Activated naive CD4-positive, alpha-beta T cell treated with anti-CD3 and anti-CD28 coated beads for 36 hours (primary cell): ENCODE measurements at regions of chr6 and their contacts with region 1.

Region 1: DNA sequence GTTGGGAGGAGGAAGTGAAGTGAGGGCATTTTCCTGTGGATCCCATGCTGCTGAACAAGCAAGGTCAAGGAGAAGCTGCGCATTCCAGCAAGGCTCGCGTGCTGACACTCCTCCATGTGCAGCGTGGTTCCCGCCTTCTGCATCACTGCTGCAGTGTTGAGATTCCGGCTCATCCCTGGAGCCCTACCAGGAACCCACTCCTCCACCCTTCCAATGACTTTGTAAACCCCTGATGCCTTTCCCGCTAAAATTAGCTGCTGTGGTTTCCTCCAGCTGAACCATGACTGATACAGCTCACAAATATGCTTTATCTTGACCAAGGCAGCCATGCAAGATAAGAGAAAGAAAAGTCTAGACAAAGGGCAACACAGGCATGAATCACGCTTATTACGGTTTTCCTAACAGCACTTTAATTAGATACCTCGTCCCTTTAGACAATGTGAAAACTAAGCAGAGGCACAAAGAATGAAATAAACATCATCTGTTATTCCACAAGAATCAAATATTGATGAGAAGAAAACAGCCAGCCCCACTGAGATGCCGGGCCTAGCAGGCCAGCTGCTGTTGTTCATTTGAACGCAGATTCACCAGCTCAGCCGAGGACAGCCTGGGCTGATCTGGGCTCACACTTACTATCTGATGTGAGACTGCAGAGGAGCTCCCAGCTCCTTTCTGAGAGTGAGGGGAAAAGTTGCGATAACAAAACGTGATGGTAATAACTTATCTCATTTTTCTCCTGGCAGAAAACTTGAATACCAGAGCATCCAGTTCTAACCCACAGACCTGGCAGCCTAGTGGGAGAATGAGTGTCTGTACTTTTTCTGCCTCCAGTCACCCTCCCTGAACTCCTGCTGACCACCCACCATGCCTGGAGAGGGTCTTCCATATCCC is 14.2 kb upstream of the BNIP5 start:
- DNase-seq: no peak
- H3K4me3 Mint-ChIP-seq: no peak overlapping the region
- H3K27ac Mint-ChIP-seq: no peak overlapping the region
- H3K4me1 Mint-ChIP-seq: peaks cover 3% of the 10 kb centered on the region
- H3K27me3 Mint-ChIP-seq: peaks cover 2% of the 10 kb centered on the region

Region 2: DNA sequence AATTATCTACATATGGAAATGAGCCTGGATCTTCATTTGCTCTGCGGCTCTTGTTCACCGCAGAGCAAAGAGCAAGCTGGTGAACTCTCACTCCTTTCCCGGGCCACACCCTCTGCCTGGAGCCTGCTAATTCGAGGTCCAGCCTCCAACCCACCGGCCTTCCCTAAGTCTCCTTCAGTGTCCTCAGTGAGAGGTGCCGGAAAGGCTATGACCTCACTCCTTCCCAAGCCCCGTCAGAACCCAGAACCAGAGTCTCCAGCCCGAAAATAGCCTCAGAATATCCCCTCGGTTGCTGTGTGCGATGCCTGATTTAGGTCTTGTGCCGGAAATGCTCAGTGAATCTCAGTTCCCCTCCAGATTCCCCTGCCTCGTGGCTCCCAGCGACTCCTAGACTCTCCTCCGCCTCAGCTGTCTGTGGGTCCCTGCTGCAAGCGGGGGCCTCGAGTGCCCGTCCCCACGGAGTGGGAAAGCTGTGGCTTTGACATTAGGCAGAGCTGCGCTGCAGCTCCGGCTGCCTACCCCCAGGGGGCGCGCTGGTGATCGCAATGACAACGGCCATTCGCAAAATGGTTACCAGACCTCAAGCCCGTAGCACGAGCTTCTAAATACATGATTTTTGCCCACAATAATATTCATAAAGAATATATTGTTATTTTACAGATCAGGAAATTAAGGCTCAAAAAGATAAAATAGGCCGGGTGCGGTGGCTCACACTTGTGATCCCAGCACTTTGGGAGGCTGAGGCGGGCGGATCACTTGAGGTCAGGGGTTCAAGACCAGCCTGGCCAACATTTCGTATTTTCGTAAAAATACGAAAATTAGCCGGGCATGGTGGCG is 10.1 kb before region 1 on chr6:
- CTCF ChIA-PET with region 1: interaction called, 16 read pairs
- intact Hi-C with region 1: no loop called
- DNase-seq: peak; percentile 86
- H3K4me3 Mint-ChIP-seq: peak overlapping the region; percentile 36
- H3K27ac Mint-ChIP-seq: no peak overlapping the region
- H3K4me1 Mint-ChIP-seq: peaks cover 11% of the 10 kb centered on the region
- H3K27me3 Mint-ChIP-seq: peaks cover 12% of the 10 kb centered on the region